Right cardiac atrium (tissue), 5 donors: ENCODE measurements at regions of chr20 and their contacts with region 1.

Region 1: DNA sequence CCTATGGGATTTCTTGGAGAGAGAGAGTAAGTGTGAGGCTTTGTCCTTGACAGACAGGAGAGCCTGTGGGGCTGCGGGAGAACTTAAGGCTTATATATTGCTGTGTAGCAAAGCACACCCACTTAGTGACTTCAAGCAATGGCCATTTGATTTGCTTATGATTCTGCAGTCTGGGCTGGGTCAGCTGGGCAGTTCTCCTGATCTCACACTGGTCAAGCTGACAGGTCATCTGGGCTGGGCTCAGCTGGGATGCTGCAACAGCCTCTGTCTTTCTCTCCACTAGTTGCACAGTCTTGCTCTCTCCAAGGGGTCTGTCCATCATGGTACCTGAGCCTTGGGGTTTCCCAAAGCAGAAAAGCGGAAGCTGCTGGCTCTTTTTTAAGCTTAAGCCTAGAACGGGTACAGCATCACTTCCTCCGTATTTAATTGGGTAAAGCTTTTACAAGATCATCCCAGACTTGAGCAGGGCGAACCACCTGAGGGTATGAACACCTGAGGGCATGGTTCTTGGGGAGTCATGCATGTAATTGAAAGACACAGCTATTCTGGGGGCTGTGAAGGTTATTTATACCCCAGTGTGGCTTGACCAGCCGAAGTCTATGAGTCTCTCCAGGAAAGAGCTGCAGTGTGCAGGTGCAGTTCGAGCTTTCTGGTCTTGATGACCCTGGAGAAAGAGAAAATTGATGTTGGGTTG is 13.3 kb upstream of the GGTLC1 start:
- DNase-seq: no peak
- ATAC-seq: no peak
- H3K4me3 ChIP-seq: no peak overlapping the region
- H3K27ac ChIP-seq: no peak overlapping the region
- H3K4me1 ChIP-seq: no peaks in the 10 kb centered on the region
- H3K27me3 ChIP-seq: no peaks in the 10 kb centered on the region

Region 2: DNA sequence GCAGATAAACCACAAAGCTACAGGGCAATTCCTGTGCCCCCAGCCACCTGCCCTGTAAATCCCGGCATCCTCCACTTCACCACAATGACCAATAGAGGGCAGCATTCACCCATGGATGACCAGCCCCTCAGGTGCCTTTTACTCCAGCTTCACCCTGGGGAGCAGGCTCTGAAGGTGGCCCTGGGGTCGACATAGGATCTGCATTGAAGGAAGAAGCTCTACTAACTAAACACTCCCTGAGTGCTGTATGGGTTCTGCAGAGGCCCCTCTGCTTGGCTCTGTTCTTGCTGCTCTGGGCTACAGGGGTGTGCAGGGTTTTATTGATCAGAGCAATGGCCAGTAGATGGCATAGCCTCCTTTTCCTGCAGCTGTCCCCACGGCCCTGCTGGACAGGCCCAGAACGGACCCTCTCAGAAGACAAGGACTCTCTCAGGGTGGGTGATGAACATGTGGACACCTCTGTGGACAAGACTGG is 333.3 kb before region 1 on chr20:
- intact Hi-C with region 1: loop called in 1 of 4 experiments (anchors 5 kb)
- DNase-seq: peak; percentile 29 to 62 (median 54)
- ATAC-seq: peak; percentile 78 to 85
- H3K4me3 ChIP-seq: no peak overlapping the region
- H3K27ac ChIP-seq: no peak overlapping the region
- H3K4me1 ChIP-seq: no peaks in the 10 kb centered on the region
- H3K27me3 ChIP-seq: no peaks in the 10 kb centered on the region

Region 3: GRCh38 chr20:24452498-24453127 is 450.8 kb after region 1 on chr20:
- intact Hi-C with region 1: no loop called
- DNase-seq: no peak
- ATAC-seq: no peak
- H3K4me3 ChIP-seq: no peak overlapping the region
- H3K27ac ChIP-seq: no peak overlapping the region
- H3K4me1 ChIP-seq: no peaks in the 10 kb centered on the region
- H3K27me3 ChIP-seq: no peaks in the 10 kb centered on the region